ENCODE measurements at regions of chr10 and their contacts with region 1.

Region 1: DNA sequence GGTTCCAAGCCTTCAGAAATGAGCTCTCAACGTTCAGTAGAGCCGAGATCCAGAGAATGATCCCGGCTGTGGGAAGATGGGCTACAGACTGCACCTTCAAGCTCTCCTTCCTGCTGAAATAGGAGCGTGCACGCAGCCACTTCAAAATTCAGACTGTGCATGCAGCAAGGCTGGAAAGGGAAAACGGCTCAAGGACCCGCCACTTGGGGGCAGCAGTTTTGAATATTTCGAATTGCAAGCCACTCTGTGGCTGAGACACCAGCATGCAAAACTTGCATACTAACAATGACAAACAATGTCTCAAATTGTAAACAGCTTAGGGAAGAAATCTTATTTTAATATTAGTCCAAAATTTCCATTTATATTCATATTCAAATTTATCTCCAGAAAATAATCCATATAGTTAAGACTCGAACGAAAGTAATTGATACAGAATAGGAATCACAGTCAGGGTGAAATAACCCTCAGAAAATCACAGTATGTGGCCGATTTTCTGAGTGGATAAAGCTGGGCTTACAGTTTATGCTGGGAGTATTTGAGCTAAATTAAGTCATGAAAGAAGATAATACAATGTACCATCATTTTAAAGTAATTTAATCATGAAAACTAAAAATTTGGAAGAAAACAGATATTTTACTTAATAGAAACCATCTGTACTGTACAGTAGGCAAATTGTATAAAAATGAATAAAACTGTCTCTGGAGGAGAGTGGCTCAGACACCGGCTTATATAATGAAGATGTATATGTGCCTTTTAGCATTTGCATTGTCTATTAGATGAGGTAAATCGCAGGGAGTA is 137.9 kb upstream of the MKI67 start:
- DNase-seq: peak in 12 of 14 experiments; percentile 17 to 51 (median 29)
- ATAC-seq: no peak
- H3K4me3 ChIP-seq: no peak overlapping the region
- H3K4me3 Mint-ChIP-seq: no peak overlapping the region
- H3K27ac ChIP-seq: no peak overlapping the region
- H3K27ac Mint-ChIP-seq: no peak overlapping the region
- H3K4me1 ChIP-seq: no peaks in the 10 kb centered on the region
- H3K4me1 Mint-ChIP-seq: no peaks in the 10 kb centered on the region
- H3K27me3 ChIP-seq: peaks cover 36 to 48% of the 10 kb centered on the region in 2 experiments
- H3K27me3 Mint-ChIP-seq: peaks cover 53% of the 10 kb centered on the region
- CTCF ChIP-seq: peak; percentile 62

Region 2: GRCh38 chr10:127415901-127416581 is 848.0 kb before region 1 on chr10:
- CTCF ChIA-PET with region 1: no interaction called
- POLR2A ChIA-PET with region 1: no interaction called
- intact Hi-C with region 1: no loop called
- DNase-seq: no peak
- ATAC-seq: no peak
- H3K4me3 ChIP-seq: no peak overlapping the region
- H3K4me3 Mint-ChIP-seq: no peak overlapping the region
- H3K27ac ChIP-seq: no peak overlapping the region
- H3K27ac Mint-ChIP-seq: no peak overlapping the region
- H3K4me1 ChIP-seq: no peaks in the 10 kb centered on the region
- H3K4me1 Mint-ChIP-seq: no peaks in the 10 kb centered on the region
- H3K27me3 ChIP-seq: peaks cover 0 to 2% of the 10 kb centered on the region in 2 experiments
- H3K27me3 Mint-ChIP-seq: no peaks in the 10 kb centered on the region
- CTCF ChIP-seq: no peak

Region 3: DNA sequence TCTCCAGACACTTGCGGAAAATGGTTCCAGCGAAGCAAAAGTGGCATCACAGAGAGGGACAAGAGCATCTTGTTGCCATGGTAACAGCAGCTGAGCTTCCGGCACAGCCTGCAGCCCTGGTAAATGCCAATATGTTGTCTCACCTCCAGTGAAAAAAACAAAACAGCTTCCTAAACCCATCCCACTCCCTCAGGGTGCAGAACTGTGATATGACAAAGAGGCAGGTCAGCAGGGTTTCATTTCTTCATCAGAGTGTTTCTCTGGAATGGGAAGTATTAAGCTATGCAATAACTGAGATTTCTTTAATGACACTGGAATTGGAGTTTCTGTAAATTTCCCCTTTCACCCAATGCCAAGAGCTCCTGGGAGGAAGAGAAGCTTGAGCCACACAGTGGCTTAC is 461.5 kb before region 1 on chr10:
- CTCF ChIA-PET with region 1: no interaction called
- POLR2A ChIA-PET with region 1: no interaction called
- intact Hi-C with region 1: no loop called
- DNase-seq: no peak
- ATAC-seq: no peak
- H3K4me3 ChIP-seq: no peak overlapping the region
- H3K4me3 Mint-ChIP-seq: no peak overlapping the region
- H3K27ac ChIP-seq: no peak overlapping the region
- H3K27ac Mint-ChIP-seq: no peak overlapping the region
- H3K4me1 ChIP-seq: no peaks in the 10 kb centered on the region
- H3K4me1 Mint-ChIP-seq: peaks cover 5% of the 10 kb centered on the region
- H3K27me3 ChIP-seq: peaks cover 6 to 7% of the 10 kb centered on the region in 2 experiments
- H3K27me3 Mint-ChIP-seq: peaks cover 39% of the 10 kb centered on the region
- CTCF ChIP-seq: no peak

Region 4: DNA sequence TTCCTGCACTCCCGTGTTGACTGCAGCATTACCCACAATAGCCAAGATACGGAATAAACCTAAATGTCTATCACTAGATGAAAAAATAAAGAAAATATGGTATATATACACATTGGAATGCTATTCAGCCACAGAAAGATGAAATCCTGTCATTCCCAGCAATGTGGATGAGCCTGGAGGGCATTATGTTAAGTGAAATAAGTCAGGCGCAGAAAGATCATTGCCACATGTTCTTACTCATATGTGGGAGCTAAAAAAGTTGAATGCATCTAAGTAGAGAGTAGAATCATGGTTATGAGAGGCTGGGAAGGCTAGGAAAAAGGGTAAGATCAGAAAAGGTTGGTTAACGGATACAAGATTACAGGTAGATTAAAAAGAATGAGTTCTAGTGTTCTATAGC is 81.3 kb after region 1 on chr10:
- CTCF ChIA-PET with region 1: no interaction called
- POLR2A ChIA-PET with region 1: no interaction called
- intact Hi-C with region 1: no loop called
- DNase-seq: no peak
- ATAC-seq: no peak
- H3K4me3 ChIP-seq: no peak overlapping the region
- H3K4me3 Mint-ChIP-seq: no peak overlapping the region
- H3K27ac ChIP-seq: no peak overlapping the region
- H3K27ac Mint-ChIP-seq: no peak overlapping the region
- H3K4me1 ChIP-seq: no peaks in the 10 kb centered on the region
- H3K4me1 Mint-ChIP-seq: no peaks in the 10 kb centered on the region
- H3K27me3 ChIP-seq: no peaks in the 10 kb centered on the region
- H3K27me3 Mint-ChIP-seq: peaks cover 20% of the 10 kb centered on the region
- CTCF ChIP-seq: no peak

Region 5: GRCh38 chr10:128386816-128387604 is 122.9 kb after region 1 on chr10:
- CTCF ChIA-PET with region 1: no interaction called
- POLR2A ChIA-PET with region 1: no interaction called
- intact Hi-C with region 1: no loop called
- DNase-seq: no peak
- ATAC-seq: no peak
- H3K4me3 ChIP-seq: no peak overlapping the region
- H3K4me3 Mint-ChIP-seq: no peak overlapping the region
- H3K27ac ChIP-seq: no peak overlapping the region
- H3K27ac Mint-ChIP-seq: no peak overlapping the region
- H3K4me1 ChIP-seq: no peaks in the 10 kb centered on the region
- H3K4me1 Mint-ChIP-seq: no peaks in the 10 kb centered on the region
- H3K27me3 ChIP-seq: peaks cover 0 to 4% of the 10 kb centered on the region in 2 experiments
- H3K27me3 Mint-ChIP-seq: peaks cover 15% of the 10 kb centered on the region
- CTCF ChIP-seq: no peak

Region 6: DNA sequence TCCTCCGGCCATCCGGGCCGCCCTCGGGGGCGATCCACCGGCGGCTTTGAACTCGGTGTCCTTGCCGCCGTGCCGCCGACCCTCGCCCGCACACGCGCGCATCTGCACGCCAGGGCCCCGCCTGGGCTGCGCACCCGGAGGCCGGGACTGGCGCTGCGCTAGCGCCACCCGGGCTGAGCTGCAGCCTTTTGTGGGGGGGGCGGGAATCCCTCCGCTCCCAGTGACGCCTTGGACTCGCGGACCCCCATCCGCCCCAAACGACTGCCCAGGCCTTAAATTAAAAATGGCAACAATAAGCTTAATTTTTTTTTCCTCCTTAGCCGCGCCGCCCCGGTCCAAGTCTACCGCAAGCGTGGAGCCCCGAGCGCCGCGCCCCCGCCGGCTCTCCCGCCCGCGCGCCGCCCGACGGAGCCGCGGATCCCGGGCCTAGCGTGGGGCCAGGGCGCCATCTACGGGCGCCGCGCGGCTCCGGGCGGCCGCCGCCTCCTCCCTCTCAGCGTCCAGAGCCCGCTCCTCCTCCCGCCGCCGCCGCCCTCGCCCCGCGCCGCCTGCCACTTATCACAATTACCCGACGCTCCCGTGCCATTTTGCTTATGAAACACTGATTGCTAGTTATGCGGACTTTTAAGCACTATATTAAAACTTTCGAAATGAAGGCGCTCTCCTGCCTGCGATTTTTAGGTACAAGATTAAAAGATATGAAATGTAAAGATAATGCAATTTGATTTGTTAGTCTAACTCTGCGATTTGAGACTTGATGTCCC is 1707.5 kb after region 1 on chr10:
- CTCF ChIA-PET with region 1: no interaction called
- POLR2A ChIA-PET with region 1: no interaction called
- intact Hi-C with region 1: loop called in 1 of 2 experiments (anchors 5 kb)
- DNase-seq: peak in 5 of 14 experiments; percentile 10 to 68 (median 35)
- ATAC-seq: peak; percentile 64
- H3K4me3 ChIP-seq: no peak overlapping the region
- H3K4me3 Mint-ChIP-seq: no peak overlapping the region
- H3K27ac ChIP-seq: no peak overlapping the region
- H3K27ac Mint-ChIP-seq: no peak overlapping the region
- H3K4me1 ChIP-seq: peaks cover 25% of the 10 kb centered on the region
- H3K4me1 Mint-ChIP-seq: peaks cover 13% of the 10 kb centered on the region
- H3K27me3 ChIP-seq: peaks cover 65 to 87% of the 10 kb centered on the region in 2 experiments
- H3K27me3 Mint-ChIP-seq: peaks cover 75% of the 10 kb centered on the region
- CTCF ChIP-seq: no peak

Region 7: GRCh38 chr10:130127364-130128061 is 1863.4 kb after region 1 on chr10:
- CTCF ChIA-PET with region 1: interaction called, 3 read pairs
- POLR2A ChIA-PET with region 1: no interaction called
- intact Hi-C with region 1: loop called in 1 of 2 experiments (anchors 5 kb)
- DNase-seq: peak in 13 of 14 experiments; percentile 29 to 80 (median 39)
- ATAC-seq: peak; percentile 93
- H3K4me3 ChIP-seq: no peak overlapping the region
- H3K4me3 Mint-ChIP-seq: no peak overlapping the region
- H3K27ac ChIP-seq: no peak overlapping the region
- H3K27ac Mint-ChIP-seq: no peak overlapping the region
- H3K4me1 ChIP-seq: peaks cover 4% of the 10 kb centered on the region
- H3K4me1 Mint-ChIP-seq: peaks cover 5% of the 10 kb centered on the region
- H3K27me3 ChIP-seq: peaks cover 7 to 17% of the 10 kb centered on the region in 2 experiments
- H3K27me3 Mint-ChIP-seq: peaks cover 33% of the 10 kb centered on the region
- CTCF ChIP-seq: peak; percentile 92